ENCODE measurements at regions of chr11 and their contacts with region 1.

Region 1: DNA sequence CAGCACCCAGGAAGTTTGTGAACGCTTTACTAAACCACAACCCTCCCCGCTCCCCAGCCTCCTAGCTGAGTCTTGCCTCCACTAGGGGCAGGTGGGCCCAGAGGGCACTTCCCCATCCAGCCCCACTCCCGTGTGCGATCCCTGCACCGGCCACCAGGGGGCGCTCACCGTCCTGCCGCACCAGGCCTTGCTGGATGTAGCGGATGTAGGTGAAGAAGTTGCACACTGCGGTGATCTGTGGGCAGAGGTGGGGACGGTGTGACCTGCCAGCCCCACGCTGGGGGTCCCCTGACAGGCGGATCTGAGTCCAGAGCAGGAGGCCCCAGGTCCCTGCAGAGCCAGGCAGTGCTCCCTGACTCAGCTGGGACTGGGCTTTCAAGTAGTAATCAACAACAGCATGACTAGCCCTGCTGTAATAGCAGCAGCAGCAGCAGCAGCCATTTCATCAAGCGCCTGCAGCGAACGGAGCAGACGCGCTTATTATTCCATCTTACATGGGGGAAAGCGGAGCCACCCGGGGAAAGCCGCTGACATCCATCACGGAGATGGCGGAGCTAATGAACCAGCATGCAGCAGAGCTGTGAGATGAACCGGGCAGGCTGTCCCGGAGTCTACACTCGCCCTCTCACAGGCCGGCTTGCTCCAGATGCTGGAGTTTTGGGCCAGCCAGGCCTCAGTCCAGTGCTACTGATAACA is 7.9 kb upstream of the FADS3 start:
- DNase-seq: peak; percentile 96
- H3K4me3 ChIP-seq: no peak overlapping the region
- H3K27ac ChIP-seq: peak overlapping the region in 3 of 4 donors; percentile 46 to 67 (median 48)
- H3K4me1 ChIP-seq: peaks cover 9 to 26% (median 19%) of the 10 kb centered on the region in 4 donors
- H3K27me3 ChIP-seq: no peaks in the 10 kb centered on the region
- CTCF ChIP-seq: peak in 2 of 3 experiments; percentile 99 to 100
- EP300 ChIP-seq: no peak
- POLR2A ChIP-seq: no peak

Region 2: DNA sequence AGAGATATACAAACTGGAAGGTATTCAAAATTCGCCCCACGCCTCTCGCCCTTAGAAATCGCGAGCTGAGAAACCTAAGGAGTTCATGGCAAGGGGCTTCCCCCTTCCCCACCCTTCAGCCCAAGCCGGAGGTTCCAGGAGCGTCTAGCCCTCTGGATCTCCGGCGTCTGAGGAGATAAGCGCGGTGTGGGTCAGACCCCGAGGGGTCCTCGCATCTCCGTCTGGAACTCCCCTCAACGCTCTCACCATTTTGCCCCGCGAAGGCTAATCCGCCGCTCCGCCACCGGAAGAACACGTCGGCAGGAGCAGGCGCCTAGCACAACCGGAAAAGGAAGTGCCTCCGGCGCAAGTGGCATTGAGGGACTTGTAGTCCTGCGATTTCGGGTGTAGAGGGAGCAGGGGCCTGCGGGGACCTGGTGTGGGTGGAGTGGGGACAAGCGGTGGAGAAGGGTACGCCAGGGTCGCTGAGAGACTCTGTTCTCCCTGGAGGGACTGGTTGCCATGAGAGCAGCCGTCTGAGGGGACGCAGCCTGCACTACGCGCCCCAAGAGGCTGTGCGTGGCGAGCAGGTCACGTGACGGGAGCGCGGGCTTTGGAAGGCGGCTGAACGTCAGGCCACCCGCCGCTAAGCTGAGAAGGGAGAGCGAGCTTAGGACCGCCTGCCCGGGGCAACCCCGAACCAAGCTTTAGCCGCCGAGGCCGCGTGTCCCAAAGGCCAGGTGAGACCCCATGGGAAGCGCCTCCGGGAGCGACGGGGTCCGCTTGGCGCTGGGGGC is 106.8 kb before region 1 on chr11 and contains the starts of genes FEN1 and TMEM258:
- intact Hi-C with region 1: loop called (anchors 2 kb)
- DNase-seq: peak; percentile 98
- H3K4me3 ChIP-seq: peak within 1 kb of the TSS; percentile 64 to 87 (median 82)
- H3K27ac ChIP-seq: peak within 1 kb of the TSS; percentile 92 to 96 (median 94)
- H3K4me1 ChIP-seq: peaks cover 23 to 46% (median 31%) of the 10 kb centered on the region in 4 donors
- H3K27me3 ChIP-seq: no peaks in the 10 kb centered on the region
- CTCF ChIP-seq: peak in 1 of 3 experiments; percentile 11
- EP300 ChIP-seq: no peak
- POLR2A ChIP-seq: peak; percentile 36
- total RNA-seq, gene FEN1: 5.0 to 10.2 (median 7.5) TPM
- total RNA-seq, gene TMEM258: 34.5 to 48.2 (median 43.8) TPM

Region 3: GRCh38 chr11:61947486-61948210 is 48.4 kb after region 1 on chr11:
- intact Hi-C with region 1: loop called (anchors 1 kb)
- DNase-seq: peak; percentile 98
- H3K4me3 ChIP-seq: no peak overlapping the region
- H3K27ac ChIP-seq: peak overlapping the region in 1 of 4 donors; percentile 38
- H3K4me1 ChIP-seq: peaks cover 13 to 34% (median 31%) of the 10 kb centered on the region in 4 donors
- H3K27me3 ChIP-seq: peaks cover 0 to 9% (median 0%) of the 10 kb centered on the region in 4 donors
- CTCF ChIP-seq: peak; percentile 90 to 98 (median 95)
- EP300 ChIP-seq: no peak
- POLR2A ChIP-seq: no peak

Region 4: DNA sequence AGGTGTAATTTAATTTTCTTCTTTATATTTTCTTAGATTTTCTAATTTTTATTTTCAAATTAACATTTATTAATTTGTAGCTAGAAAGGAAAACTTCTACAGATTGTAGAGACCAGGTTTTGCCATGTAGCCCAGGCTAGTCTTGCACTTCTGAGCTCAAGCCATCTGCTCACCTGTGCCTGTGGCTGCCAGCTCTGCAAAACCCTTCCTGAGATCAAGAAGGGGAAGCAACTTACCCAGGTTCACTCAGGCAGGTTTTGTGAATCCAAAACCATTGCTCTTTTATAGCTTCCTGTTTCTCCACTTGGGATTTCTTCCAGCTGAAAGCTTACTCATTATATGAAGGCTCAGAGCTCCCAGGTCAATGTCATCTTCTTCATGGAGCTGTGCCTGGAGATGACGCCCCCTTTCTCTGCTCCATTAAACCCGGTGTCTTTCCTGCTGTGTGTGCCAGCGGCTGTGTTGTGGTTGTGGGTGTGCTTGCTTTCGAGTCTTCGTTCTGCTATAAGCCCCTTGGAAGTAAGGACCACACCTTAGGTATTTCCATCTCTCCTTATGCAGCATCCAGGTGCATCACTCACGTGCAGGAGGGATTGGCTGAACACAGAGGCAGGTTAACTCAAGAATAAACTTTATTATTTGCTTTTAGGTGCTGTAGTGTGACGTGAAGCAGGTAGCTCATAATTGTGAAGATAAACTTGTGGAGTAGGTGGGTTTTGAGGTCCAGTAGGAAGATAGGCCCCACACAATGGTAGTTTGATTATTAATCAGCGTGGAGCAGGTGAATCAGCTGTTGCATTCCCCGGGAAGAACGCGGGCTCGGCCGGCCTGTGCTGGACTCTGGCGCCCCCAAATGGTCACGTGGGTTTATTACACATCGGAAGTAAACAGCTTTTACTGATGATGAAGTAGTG is 182.3 kb after region 1 on chr11:
- intact Hi-C with region 1: loop called (anchors 1 kb)
- DNase-seq: peak; percentile 95
- H3K4me3 ChIP-seq: peak overlapping the region in 1 of 4 donors; percentile 5
- H3K27ac ChIP-seq: no peak overlapping the region
- H3K4me1 ChIP-seq: peaks cover 0 to 9% (median 6%) of the 10 kb centered on the region in 4 donors
- H3K27me3 ChIP-seq: no peaks in the 10 kb centered on the region
- CTCF ChIP-seq: peak; percentile 91 to 94 (median 91)
- EP300 ChIP-seq: no peak
- POLR2A ChIP-seq: no peak

Region 5: GRCh38 chr11:62108017-62108750 is 208.9 kb after region 1 on chr11:
- intact Hi-C with region 1: loop called (anchors 5 kb)
- DNase-seq: no peak
- H3K4me3 ChIP-seq: no peak overlapping the region
- H3K27ac ChIP-seq: no peak overlapping the region
- H3K4me1 ChIP-seq: peaks cover 21 to 46% (median 33%) of the 10 kb centered on the region in 4 donors
- H3K27me3 ChIP-seq: no peaks in the 10 kb centered on the region
- CTCF ChIP-seq: peak; percentile 75 to 84 (median 84)
- EP300 ChIP-seq: no peak
- POLR2A ChIP-seq: no peak